ENCODE measurements at regions of chr3 and their contacts with region 1.

Region 1: DNA sequence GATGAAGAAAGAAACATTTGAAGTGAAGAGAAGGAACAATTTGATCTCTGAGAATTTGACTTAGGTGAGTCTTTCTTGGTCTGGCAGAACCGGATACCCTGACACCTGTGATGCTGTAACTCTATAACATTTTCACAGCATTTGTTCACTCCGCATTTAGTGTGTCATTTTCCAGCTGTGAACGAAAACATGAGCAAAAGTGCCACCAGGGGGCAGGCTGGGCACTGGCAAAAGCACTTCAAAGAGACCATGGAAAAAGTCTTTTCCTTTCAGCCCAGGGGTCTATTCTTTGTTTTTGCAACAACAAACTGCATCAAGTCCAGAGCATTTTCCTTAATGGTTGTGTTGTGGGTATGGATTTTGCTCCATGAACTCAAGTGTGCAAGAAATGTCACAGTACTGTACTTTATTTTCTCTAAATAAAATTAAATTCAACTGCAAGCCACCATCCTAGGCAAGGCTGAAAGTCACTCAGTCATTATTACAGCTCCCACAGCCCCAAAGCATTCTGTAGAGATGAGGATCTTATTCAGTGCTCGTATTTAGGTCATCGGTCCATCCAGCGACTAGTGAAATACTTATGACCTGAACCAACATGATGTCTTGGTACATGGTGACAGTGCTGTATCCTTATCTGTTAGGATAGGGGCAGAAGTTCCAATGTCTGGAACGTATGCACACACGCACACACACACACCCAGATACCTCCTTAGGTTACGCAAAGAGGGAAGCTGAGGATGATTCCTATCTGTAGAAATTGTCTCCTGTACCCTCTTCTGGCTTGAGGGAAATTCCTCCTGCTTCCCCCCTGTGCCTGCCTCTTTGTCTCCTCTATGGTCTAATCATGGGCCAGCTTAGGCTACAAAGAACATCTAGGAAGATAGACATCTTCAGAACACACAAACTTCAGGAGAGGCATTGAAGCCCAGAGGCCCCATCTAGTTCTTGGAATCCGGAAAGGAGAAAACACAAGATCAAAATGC is 125.5 kb downstream of the GADL1 start:
- DNase-seq: peak; percentile 39 to 69 (median 62)
- ATAC-seq: peak; percentile 48
- H3K4me3 ChIP-seq: no peak overlapping the region
- H3K4me3 Mint-ChIP-seq: peak overlapping the region in 1 of 10 donors; percentile 35
- H3K27ac ChIP-seq: no peak overlapping the region
- H3K27ac Mint-ChIP-seq: no peak overlapping the region
- H3K4me1 ChIP-seq: no peaks in the 10 kb centered on the region
- H3K4me1 Mint-ChIP-seq: peaks cover 0 to 7% (median 0%) of the 10 kb centered on the region in 7 donors
- H3K27me3 ChIP-seq: no peaks in the 10 kb centered on the region
- H3K27me3 Mint-ChIP-seq: peaks cover 0 to 32% (median 3%) of the 10 kb centered on the region in 5 donors

Region 2: DNA sequence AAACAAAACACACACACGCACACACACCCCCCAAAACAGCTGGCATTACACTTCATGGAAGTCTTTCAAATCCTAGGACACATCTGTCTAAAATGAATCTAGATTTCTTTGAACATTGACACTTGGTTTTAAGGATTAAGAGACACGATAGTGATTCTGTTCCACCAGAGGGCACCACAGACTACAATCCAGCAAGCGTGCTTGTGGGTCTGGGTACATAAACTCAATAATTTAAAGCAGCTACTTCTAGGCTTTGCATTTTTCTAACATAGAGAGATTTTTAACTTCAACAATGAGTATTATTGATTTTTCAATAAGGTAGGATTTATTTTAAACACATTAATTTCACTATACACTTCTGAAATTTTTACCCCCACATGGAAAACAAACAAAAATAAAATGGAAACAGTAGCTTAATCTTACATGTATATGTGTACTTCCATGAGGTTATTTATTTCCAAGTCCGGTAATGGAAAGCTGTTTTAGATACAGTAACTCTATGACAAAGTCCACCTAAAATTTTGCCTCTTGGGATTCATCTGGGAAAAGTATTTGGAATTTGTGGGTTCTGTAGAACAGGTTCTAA is 726.6 kb before region 1 on chr3:
- CTCF ChIA-PET with region 1: interaction called, 3 read pairs
- POLR2A ChIA-PET with region 1: no interaction called
- intact Hi-C with region 1: loop called (anchors 1 to 5 kb)
- DNase-seq: peak in 8 of 9 donors; percentile 25 to 73 (median 63)
- ATAC-seq: peak; percentile 68
- H3K4me3 ChIP-seq: no peak overlapping the region
- H3K4me3 Mint-ChIP-seq: no peak overlapping the region
- H3K27ac ChIP-seq: no peak overlapping the region
- H3K27ac Mint-ChIP-seq: no peak overlapping the region
- H3K4me1 ChIP-seq: no peaks in the 10 kb centered on the region
- H3K4me1 Mint-ChIP-seq: peaks cover 0 to 7% (median 4%) of the 10 kb centered on the region in 7 donors
- H3K27me3 ChIP-seq: no peaks in the 10 kb centered on the region
- H3K27me3 Mint-ChIP-seq: peaks cover 17 to 34% (median 28%) of the 10 kb centered on the region in 5 donors

Region 3: DNA sequence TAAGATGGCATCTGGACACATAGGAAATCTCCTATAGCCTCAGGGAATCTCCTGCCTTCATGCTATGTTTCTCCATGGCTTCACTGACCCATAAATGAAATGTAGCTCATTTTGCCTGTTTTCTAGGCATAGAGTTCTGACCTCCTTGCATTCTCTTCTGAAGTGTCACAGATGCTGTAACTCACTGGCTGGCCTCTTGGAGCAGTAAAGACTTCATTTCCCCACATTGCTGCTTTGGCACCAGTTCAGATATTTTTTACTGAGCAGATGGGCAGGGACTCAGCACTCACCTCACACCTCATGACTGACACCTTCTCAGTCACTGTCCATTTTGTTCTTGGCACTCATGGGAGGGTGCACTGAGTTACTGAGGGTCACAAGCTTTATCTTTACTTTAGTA is 449.3 kb before region 1 on chr3:
- CTCF ChIA-PET with region 1: no interaction called
- POLR2A ChIA-PET with region 1: no interaction called
- intact Hi-C with region 1: no loop called
- DNase-seq: peak in 7 of 9 donors; percentile 32 to 72 (median 63)
- ATAC-seq: peak; percentile 90
- H3K4me3 ChIP-seq: no peak overlapping the region
- H3K4me3 Mint-ChIP-seq: peak overlapping the region in 4 of 10 donors; percentile 0 to 7 (median 4)
- H3K27ac ChIP-seq: no peak overlapping the region
- H3K27ac Mint-ChIP-seq: peak overlapping the region in 6 of 9 donors; percentile 1 to 60 (median 43)
- H3K4me1 ChIP-seq: peaks cover 0 to 15% of the 10 kb centered on the region in 2 donors
- H3K4me1 Mint-ChIP-seq: peaks cover 3 to 36% (median 20%) of the 10 kb centered on the region in 7 donors
- H3K27me3 ChIP-seq: no peaks in the 10 kb centered on the region
- H3K27me3 Mint-ChIP-seq: no peaks in the 10 kb centered on the region

Region 4: GRCh38 chr3:30649572-30650318 is 119.2 kb before region 1 on chr3:
- CTCF ChIA-PET with region 1: no interaction called
- POLR2A ChIA-PET with region 1: no interaction called
- intact Hi-C with region 1: no loop called
- DNase-seq: no peak
- ATAC-seq: peak; percentile 32
- H3K4me3 ChIP-seq: no peak overlapping the region
- H3K4me3 Mint-ChIP-seq: peak overlapping the region in 8 of 10 donors; percentile 29 to 88 (median 65)
- H3K27ac ChIP-seq: peak overlapping the region; percentile 57
- H3K27ac Mint-ChIP-seq: peak overlapping the region; percentile 45 to 99 (median 97)
- H3K4me1 ChIP-seq: peaks cover 58 to 97% of the 10 kb centered on the region in 2 donors
- H3K4me1 Mint-ChIP-seq: peaks cover 67 to 100% (median 96%) of the 10 kb centered on the region in 7 donors
- H3K27me3 ChIP-seq: no peaks in the 10 kb centered on the region
- H3K27me3 Mint-ChIP-seq: no peaks in the 10 kb centered on the region

Region 5: DNA sequence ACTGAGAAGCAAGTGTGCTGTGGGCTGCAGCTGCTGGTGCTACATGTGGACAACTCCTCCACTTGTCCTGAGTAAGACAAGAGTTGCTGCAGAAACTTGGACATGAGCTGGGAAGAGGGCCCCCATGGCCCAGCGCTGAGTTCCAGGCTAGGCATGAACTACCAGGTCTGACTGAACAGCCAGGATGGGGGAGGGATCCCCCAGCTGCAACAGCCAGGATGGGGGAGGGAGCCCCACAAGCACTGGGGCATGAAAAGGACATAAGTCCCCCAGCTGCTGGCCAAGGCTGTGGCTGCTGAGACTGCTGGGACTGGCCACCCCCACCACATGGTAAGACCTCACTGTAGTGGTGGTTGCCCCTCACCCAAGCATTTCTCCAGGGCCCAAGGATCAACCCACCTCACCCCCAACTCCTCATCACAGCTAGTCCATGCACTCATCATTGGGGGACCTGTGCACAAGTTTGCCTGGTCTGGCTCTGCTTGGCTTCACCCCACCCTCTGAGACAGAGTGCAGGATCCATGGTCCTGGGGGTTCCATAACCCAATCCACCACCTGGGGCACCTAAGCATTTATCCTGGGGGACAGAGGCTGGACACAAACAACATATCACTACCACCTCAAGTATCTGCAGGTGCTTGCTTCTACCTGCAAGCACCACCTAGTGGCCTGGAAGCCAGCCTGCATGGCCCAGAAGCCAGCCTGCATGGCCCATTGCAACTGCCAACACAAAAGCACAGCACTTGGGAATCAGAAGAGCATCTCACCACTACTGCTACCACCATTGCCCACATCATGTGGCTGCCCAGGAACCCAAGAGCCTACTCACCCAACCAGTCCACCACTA is 679.3 kb after region 1 on chr3:
- CTCF ChIA-PET with region 1: no interaction called
- POLR2A ChIA-PET with region 1: no interaction called
- intact Hi-C with region 1: loop called (anchors 1 to 10 kb)
- DNase-seq: peak in 3 of 9 donors; percentile 13 to 27 (median 19)
- ATAC-seq: peak; percentile 53
- H3K4me3 ChIP-seq: no peak overlapping the region
- H3K4me3 Mint-ChIP-seq: peak overlapping the region in 3 of 10 donors; percentile 0 to 31 (median 22)
- H3K27ac ChIP-seq: no peak overlapping the region
- H3K27ac Mint-ChIP-seq: peak overlapping the region in 1 of 9 donors; percentile 11
- H3K4me1 ChIP-seq: peaks cover 5 to 11% of the 10 kb centered on the region in 2 donors
- H3K4me1 Mint-ChIP-seq: peaks cover 14 to 33% (median 26%) of the 10 kb centered on the region in 7 donors
- H3K27me3 ChIP-seq: no peaks in the 10 kb centered on the region
- H3K27me3 Mint-ChIP-seq: no peaks in the 10 kb centered on the region

Region 6: DNA sequence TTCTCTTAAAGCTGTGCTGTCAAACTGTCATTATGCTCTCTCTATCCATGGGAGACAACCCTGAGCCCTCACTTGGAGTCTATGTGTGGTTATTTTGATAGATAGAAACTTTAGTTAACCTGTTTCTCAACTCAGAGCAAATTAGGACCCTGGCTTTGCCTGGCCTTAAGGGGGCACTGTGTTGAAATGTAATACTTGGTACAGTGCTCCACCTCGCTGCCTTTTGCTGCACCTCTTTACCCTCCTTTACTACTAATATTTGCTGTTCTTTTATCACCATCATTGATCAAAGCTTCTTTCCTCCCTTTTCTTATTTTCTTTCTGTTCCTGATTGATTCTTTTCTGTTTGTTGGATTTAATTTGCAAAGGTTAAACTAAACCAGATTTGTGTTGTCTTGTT is 798.0 kb after region 1 on chr3:
- CTCF ChIA-PET with region 1: no interaction called
- POLR2A ChIA-PET with region 1: no interaction called
- intact Hi-C with region 1: loop called in 1 of 2 experiments (anchors 5 kb)
- DNase-seq: peak in 7 of 9 donors; percentile 14 to 41 (median 21)
- ATAC-seq: peak; percentile 82
- H3K4me3 ChIP-seq: no peak overlapping the region
- H3K4me3 Mint-ChIP-seq: peak overlapping the region in 8 of 10 donors; percentile 3 to 59 (median 56)
- H3K27ac ChIP-seq: no peak overlapping the region
- H3K27ac Mint-ChIP-seq: peak overlapping the region in 4 of 9 donors; percentile 11 to 33 (median 20)
- H3K4me1 ChIP-seq: peaks cover 38 to 57% of the 10 kb centered on the region in 2 donors
- H3K4me1 Mint-ChIP-seq: peaks cover 63 to 95% (median 91%) of the 10 kb centered on the region in 7 donors
- H3K27me3 ChIP-seq: no peaks in the 10 kb centered on the region
- H3K27me3 Mint-ChIP-seq: no peaks in the 10 kb centered on the region

Region 7: DNA sequence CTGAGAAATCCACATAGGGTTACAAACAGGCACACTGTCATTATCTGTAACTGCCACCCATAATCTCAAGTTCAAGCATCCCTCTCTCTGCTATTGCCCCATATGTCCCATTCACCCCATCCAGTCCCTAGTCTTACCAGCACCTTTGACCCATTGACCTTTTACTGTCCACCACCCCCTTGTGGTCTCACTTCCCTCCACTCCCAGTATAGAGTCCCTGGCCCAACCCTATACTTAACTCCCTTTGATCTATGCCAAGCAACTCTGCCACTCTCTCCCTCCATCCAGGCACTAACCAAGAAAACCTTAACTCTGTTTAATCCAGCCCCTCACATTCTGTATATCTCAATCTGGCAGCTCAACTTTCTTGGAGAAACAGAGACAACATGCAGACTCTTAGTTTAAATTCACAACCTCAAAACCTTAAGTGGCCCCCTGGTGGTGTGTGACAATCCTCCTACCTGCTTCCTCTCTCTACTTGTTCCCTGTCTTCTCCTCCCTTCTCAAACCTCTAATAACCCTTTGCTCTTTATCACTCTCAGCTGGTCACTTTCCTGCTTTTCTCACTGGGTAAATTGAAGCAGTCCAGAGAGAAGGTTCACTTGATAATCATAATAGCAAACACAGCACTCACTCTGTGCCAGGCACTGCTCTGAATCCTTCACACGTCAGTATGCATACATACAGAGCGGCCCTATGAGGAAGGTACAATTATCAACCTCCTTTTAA is 926.5 kb after region 1 on chr3:
- CTCF ChIA-PET with region 1: interaction called, 3 read pairs
- POLR2A ChIA-PET with region 1: no interaction called
- intact Hi-C with region 1: loop called in 1 of 2 experiments (anchors 1 kb)
- DNase-seq: peak in 6 of 9 donors; percentile 11 to 42 (median 36)
- ATAC-seq: peak; percentile 52
- H3K4me3 ChIP-seq: no peak overlapping the region
- H3K4me3 Mint-ChIP-seq: no peak overlapping the region
- H3K27ac ChIP-seq: no peak overlapping the region
- H3K27ac Mint-ChIP-seq: no peak overlapping the region
- H3K4me1 ChIP-seq: no peaks in the 10 kb centered on the region
- H3K4me1 Mint-ChIP-seq: peaks cover 0 to 1% (median 0%) of the 10 kb centered on the region in 7 donors
- H3K27me3 ChIP-seq: no peaks in the 10 kb centered on the region
- H3K27me3 Mint-ChIP-seq: no peaks in the 10 kb centered on the region

Region 8: GRCh38 chr3:32143849-32144757 is 1375.1 kb after region 1 on chr3:
- CTCF ChIA-PET with region 1: interaction called, 3 read pairs
- POLR2A ChIA-PET with region 1: no interaction called
- intact Hi-C with region 1: loop called in 1 of 2 experiments (anchors 1 kb)
- DNase-seq: peak in 8 of 9 donors; percentile 30 to 70 (median 60)
- ATAC-seq: peak; percentile 75
- H3K4me3 ChIP-seq: no peak overlapping the region
- H3K4me3 Mint-ChIP-seq: no peak overlapping the region
- H3K27ac ChIP-seq: no peak overlapping the region
- H3K27ac Mint-ChIP-seq: peak overlapping the region in 1 of 9 donors; percentile 21
- H3K4me1 ChIP-seq: no peaks in the 10 kb centered on the region
- H3K4me1 Mint-ChIP-seq: peaks cover 0 to 25% (median 6%) of the 10 kb centered on the region in 7 donors
- H3K27me3 ChIP-seq: no peaks in the 10 kb centered on the region
- H3K27me3 Mint-ChIP-seq: no peaks in the 10 kb centered on the region